Activated T-helper 1 cell treated with anti-CD3 and anti-CD28 coated beads, Interleukin-12 subunit alpha, Interleukin-12 subunit beta, Interleukin-2, Interleukin-4 antibody, amounts not matched to agents 30 ng/mL and 10 ng/mL and 1 ng/mL, durations not matched to agents 14 hours and 24 hours and 36 hours (primary cell): ENCODE measurements at regions of chr7 and their contacts with region 1.

Region 1: GRCh38 chr7:104923010-104923421 is 91.0 kb upstream of the KMT2E start:
- DNase-seq: peak; percentile 64
- H3K4me3 Mint-ChIP-seq: no peak overlapping the region
- H3K27ac Mint-ChIP-seq: no peak overlapping the region
- H3K4me1 Mint-ChIP-seq: peaks cover 7% of the 10 kb centered on the region
- H3K27me3 Mint-ChIP-seq: peaks cover 11% of the 10 kb centered on the region

Region 2: GRCh38 chr7:103296901-103297836 is 1625.8 kb before region 1 on chr7 and contains the start of gene PMPCB:
- intact Hi-C with region 1: loop called (anchors 5 kb)
- DNase-seq: peak; percentile 92
- H3K4me3 Mint-ChIP-seq: peak within 1 kb of the TSS; percentile 92
- H3K27ac Mint-ChIP-seq: peak within 1 kb of the TSS; percentile 90
- H3K4me1 Mint-ChIP-seq: peaks cover 28% of the 10 kb centered on the region
- H3K27me3 Mint-ChIP-seq: peaks cover 10% of the 10 kb centered on the region
- total RNA-seq, gene PMPCB: 71.5 and 75.5 TPM in 2 replicates

Region 3: GRCh38 chr7:104643587-104644217 is 279.3 kb before region 1 on chr7:
- intact Hi-C with region 1: loop called (anchors 2 kb)
- DNase-seq: no peak
- H3K4me3 Mint-ChIP-seq: no peak overlapping the region
- H3K27ac Mint-ChIP-seq: no peak overlapping the region
- H3K4me1 Mint-ChIP-seq: no peaks in the 10 kb centered on the region
- H3K27me3 Mint-ChIP-seq: no peaks in the 10 kb centered on the region

Region 4: GRCh38 chr7:104873346-104873849 is 49.6 kb before region 1 on chr7:
- intact Hi-C with region 1: no loop called
- DNase-seq: no peak
- H3K4me3 Mint-ChIP-seq: no peak overlapping the region
- H3K27ac Mint-ChIP-seq: no peak overlapping the region
- H3K4me1 Mint-ChIP-seq: peaks cover 3% of the 10 kb centered on the region
- H3K27me3 Mint-ChIP-seq: peaks cover 4% of the 10 kb centered on the region

Region 5: DNA sequence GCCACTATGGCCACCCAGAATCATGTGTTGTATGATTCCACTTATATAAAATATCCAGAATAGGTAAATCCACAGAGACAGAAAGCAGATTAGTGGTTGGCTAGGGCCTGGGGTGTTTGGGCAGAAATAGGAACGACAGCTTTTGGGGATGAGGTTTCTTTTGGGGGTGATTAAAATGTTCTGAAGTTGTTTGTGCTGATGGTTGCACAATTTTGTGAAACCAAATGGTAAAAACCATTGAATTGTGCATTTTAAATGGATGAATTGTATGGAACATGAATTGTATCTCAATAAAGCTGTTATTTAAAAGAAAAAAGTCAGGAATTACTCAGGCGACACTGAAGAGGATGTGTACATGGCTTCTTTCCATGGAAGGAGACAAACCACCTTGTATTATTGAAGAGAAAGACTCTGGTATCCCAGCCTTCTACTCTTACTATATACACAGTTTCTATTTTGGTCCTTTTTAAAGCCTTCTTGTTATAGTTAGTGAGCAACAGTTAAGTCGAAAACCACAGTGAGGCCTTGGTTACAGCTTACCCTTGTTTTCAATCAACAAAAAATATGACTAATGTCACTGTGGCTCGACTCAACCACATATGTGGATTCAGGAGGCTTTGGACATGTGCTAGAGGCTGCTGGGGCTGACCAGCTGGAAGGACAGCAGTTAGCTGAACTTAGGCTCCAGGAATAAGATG is 33.9 kb after region 1 on chr7:
- intact Hi-C with region 1: loop called (anchors 1 kb)
- DNase-seq: peak; percentile 62
- H3K4me3 Mint-ChIP-seq: peak overlapping the region; percentile 69
- H3K27ac Mint-ChIP-seq: peak overlapping the region; percentile 100
- H3K4me1 Mint-ChIP-seq: peaks cover 67% of the 10 kb centered on the region
- H3K27me3 Mint-ChIP-seq: no peaks in the 10 kb centered on the region

Region 6: GRCh38 chr7:105046414-105046813 is 123.4 kb after region 1 on chr7:
- intact Hi-C with region 1: loop called (anchors 2 kb)
- DNase-seq: no peak
- H3K4me3 Mint-ChIP-seq: no peak overlapping the region
- H3K27ac Mint-ChIP-seq: no peak overlapping the region
- H3K4me1 Mint-ChIP-seq: peaks cover 41% of the 10 kb centered on the region
- H3K27me3 Mint-ChIP-seq: no peaks in the 10 kb centered on the region

Region 7: DNA sequence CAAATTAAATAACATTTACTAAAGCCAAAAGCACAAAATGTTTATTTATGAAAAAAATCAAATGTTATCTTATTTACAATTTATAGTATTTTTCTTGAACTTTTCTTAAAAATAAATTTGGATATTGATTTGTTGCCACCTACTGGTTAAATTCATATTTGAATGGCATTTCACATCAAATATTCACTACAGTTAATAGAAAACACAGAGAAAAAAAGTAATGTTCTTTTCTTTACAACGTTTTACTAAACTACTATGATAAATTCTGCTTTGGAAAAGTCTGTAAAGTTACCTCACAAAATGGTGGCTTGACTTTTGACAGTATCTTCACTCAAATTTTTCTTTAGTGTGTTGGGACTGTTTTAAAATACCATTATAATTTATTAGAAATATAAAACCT is 413.0 kb after region 1 on chr7:
- intact Hi-C with region 1: loop called (anchors 1 kb)
- DNase-seq: no peak
- H3K4me3 Mint-ChIP-seq: no peak overlapping the region
- H3K27ac Mint-ChIP-seq: no peak overlapping the region
- H3K4me1 Mint-ChIP-seq: peaks cover 13% of the 10 kb centered on the region
- H3K27me3 Mint-ChIP-seq: no peaks in the 10 kb centered on the region

Region 8: GRCh38 chr7:105589356-105590077 is 666.5 kb after region 1 on chr7:
- intact Hi-C with region 1: loop called (anchors 1 kb)
- DNase-seq: peak; percentile 24
- H3K4me3 Mint-ChIP-seq: no peak overlapping the region
- H3K27ac Mint-ChIP-seq: no peak overlapping the region
- H3K4me1 Mint-ChIP-seq: peaks cover 19% of the 10 kb centered on the region
- H3K27me3 Mint-ChIP-seq: peaks cover 3% of the 10 kb centered on the region